ENCODE measurements at regions of chr1 and their contacts with region 1.

Region 1: DNA sequence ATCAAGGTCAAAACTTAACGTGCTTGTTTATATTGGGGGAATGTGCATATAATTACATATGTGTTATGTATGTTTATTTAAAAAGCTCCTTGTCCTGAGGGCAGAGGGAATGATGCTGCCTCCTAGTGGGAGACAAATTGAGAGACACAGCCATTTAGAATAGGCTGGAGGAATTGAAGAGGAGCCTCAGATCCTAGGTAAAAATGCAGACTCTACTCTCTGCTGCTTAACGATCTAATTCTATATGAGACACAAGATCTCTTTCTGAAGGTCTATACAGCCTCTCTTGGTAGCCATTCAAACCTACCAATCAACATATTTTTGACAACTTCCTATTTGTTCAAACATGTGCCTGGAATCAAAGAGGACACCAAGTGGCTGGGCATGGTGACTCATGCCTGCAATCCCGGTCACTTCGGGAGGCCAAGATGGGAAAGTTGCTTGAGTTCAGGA is 136.6 kb upstream of the ZNF648 start:
- DNase-seq: no peak
- ATAC-seq: no peak

Region 2: DNA sequence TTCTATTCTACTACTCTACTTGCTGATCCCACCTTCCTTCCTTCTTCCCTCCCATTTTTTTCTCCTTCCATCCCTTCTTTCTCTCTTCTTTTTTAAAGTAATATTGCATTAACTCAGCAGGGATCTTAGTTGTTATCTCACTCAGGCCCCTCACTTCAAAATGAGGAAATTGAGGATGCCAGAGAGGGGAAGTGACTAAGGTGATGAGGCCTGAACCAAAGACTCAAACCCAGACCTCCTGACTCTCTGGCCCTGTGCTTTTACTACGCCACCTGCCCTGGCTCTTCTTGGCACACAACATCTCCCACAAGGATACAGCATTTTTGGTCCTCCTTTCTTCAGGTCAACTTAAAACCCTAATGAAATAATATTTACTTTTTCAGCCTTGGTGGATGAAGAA is 15.1 kb after region 1 on chr1:
- intact Hi-C with region 1: loop called (anchors 1 kb)
- DNase-seq: no peak
- ATAC-seq: no peak

Measured in Right ventricle myocardium inferior (tissue), 1 donor.